ENCODE measurements at regions of chr2 and their contacts with region 1.

Region 1: GRCh38 chr2:85420536-85421259 is 2.2 kb downstream of the SH2D6 start:
- DNase-seq: peak; percentile 95
- ATAC-seq: peak; percentile 76
- H3K4me3 Mint-ChIP-seq: peak overlapping the region; percentile 78
- H3K27ac Mint-ChIP-seq: peak overlapping the region; percentile 80
- H3K4me1 Mint-ChIP-seq: peaks cover 25% of the 10 kb centered on the region
- H3K27me3 Mint-ChIP-seq: no peaks in the 10 kb centered on the region
- CTCF ChIP-seq: peak; percentile 90

Region 2: DNA sequence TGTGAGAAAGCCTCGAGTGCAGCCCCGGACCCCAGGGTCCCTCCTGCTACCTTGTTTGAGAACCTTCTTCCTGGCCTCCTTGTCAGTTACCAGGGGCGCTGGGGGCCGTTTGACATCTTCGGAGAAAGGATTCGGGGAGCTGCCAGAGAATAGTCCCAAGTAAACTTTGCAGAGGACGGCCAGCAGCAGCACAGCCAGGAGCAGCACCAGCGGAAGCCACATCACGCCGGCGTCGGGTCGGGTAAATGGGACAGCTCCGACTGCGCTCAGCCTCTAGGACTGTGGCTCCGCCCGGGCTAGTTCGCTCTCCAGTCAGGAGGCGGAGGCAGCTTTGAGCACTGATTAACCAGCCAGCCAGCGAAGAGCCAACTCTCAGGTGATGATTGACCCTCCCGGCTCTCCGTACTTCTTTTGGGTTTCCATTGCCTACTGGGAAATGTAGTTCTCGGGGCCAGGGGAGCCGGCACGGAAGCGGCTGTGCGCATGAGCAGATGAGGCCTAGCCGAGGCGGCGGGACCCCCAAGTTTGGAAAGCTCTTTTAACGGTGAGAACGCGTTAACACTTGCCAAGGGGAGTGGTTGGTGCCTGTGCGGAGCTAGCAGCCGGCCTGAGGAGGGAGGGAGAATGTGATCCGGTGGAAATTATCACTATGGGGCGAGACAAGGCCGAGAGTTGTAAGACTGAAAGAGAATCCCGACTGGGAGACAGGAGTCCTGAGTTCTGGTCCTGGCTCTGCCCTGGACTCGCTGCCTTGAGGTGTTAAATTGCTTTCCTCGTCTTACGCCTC is 66.2 kb before region 1 on chr2 and contains the starts of genes ELMOD3 and RETSAT:
- CTCF ChIA-PET with region 1: interaction called, 6 read pairs
- POLR2A ChIA-PET with region 1: interaction called, 28 read pairs
- intact Hi-C with region 1: loop called (anchors 1 kb)
- DNase-seq: peak; percentile 84
- ATAC-seq: peak; percentile 99
- H3K4me3 Mint-ChIP-seq: peak within 1 kb of the TSS; percentile 100
- H3K27ac Mint-ChIP-seq: peak within 1 kb of the TSS; percentile 99
- H3K4me1 Mint-ChIP-seq: peaks cover 48% of the 10 kb centered on the region
- H3K27me3 Mint-ChIP-seq: no peaks in the 10 kb centered on the region
- CTCF ChIP-seq: no peak
- total RNA-seq, gene ELMOD3: 19.2 and 25.4 TPM in 2 replicates
- total RNA-seq, gene RETSAT: 16.9 and 17.1 TPM in 2 replicates

Region 3: GRCh38 chr2:85437488-85438284 is 17.0 kb after region 1 on chr2:
- CTCF ChIA-PET with region 1: interaction called, 6 read pairs
- POLR2A ChIA-PET with region 1: interaction called, 31 read pairs
- intact Hi-C with region 1: loop called (anchors 1 kb)
- DNase-seq: peak; percentile 80
- ATAC-seq: peak; percentile 86
- H3K4me3 Mint-ChIP-seq: peak overlapping the region; percentile 87
- H3K27ac Mint-ChIP-seq: peak overlapping the region; percentile 95
- H3K4me1 Mint-ChIP-seq: peaks cover 33% of the 10 kb centered on the region
- H3K27me3 Mint-ChIP-seq: no peaks in the 10 kb centered on the region
- CTCF ChIP-seq: no peak

Region 4: GRCh38 chr2:85551698-85552678 is 131.3 kb after region 1 on chr2:
- CTCF ChIA-PET with region 1: interaction called, 162 read pairs
- POLR2A ChIA-PET with region 1: interaction called, 70 read pairs
- intact Hi-C with region 1: loop called (anchors 1 kb)
- DNase-seq: peak; percentile 63
- ATAC-seq: peak; percentile 98
- H3K4me3 Mint-ChIP-seq: no peak overlapping the region
- H3K27ac Mint-ChIP-seq: no peak overlapping the region
- H3K4me1 Mint-ChIP-seq: peaks cover 4% of the 10 kb centered on the region
- H3K27me3 Mint-ChIP-seq: no peaks in the 10 kb centered on the region
- CTCF ChIP-seq: peak; percentile 28

Region 5: DNA sequence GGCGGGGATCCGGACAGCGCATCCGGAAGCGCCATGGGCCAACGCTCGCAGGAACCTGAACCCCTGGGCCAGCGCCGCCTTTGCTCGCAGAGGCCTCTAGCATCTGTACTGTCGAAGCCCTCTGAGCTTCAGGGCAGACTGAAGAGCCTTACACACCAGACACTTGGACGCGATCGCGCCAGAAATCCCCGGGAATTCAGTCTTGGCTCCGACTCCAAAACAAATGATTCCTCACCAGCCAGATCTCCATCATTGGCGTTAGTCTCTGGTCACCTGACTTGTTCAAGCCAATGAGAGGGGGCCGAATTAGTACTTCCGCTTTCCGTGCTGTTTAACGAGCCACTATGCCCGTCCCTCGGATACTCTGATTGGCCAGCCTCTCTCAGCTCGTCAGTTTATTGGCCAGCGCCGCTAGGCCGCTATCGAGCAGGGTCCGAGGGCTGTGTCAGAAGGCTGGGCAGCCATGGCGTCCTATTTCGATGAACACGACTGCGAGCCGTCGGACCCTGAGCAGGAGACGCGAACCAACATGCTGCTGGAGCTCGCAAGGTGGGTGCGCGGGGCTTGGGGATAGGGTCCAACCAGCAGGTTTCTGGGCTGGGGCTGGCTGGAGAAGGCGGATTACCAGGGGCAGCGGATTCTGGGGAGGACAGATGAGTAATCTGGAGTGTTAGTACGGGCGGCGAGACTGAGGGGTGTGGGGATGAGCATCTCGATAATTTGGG is 174.8 kb after region 1 on chr2 and contains the start of gene RNF181:
- CTCF ChIA-PET with region 1: no interaction called
- POLR2A ChIA-PET with region 1: interaction called, 13 read pairs
- intact Hi-C with region 1: loop called (anchors 1 kb)
- DNase-seq: peak; percentile 71
- ATAC-seq: peak; percentile 99
- H3K4me3 Mint-ChIP-seq: peak within 1 kb of the TSS; percentile 99
- H3K27ac Mint-ChIP-seq: peak within 1 kb of the TSS; percentile 97
- H3K4me1 Mint-ChIP-seq: peaks cover 36% of the 10 kb centered on the region
- H3K27me3 Mint-ChIP-seq: no peaks in the 10 kb centered on the region
- CTCF ChIP-seq: no peak
- total RNA-seq, gene RNF181: 104 and 108 TPM in 2 replicates

Region 6: GRCh38 chr2:85642725-85643124 is 222.0 kb after region 1 on chr2:
- CTCF ChIA-PET with region 1: no interaction called
- POLR2A ChIA-PET with region 1: interaction called, 4 read pairs
- intact Hi-C with region 1: loop called (anchors 1 kb)
- DNase-seq: no peak
- ATAC-seq: no peak
- H3K4me3 Mint-ChIP-seq: no peak overlapping the region
- H3K27ac Mint-ChIP-seq: no peak overlapping the region
- H3K4me1 Mint-ChIP-seq: peaks cover 8% of the 10 kb centered on the region
- H3K27me3 Mint-ChIP-seq: no peaks in the 10 kb centered on the region
- CTCF ChIP-seq: no peak

Region 7: GRCh38 chr2:86105252-86105968 is 684.7 kb after region 1 on chr2 and contains the start of gene POLR1A:
- CTCF ChIA-PET with region 1: no interaction called
- POLR2A ChIA-PET with region 1: no interaction called
- intact Hi-C with region 1: loop called (anchors 10 kb)
- DNase-seq: peak; percentile 70
- ATAC-seq: peak; percentile 78
- H3K4me3 Mint-ChIP-seq: peak within 1 kb of the TSS; percentile 99
- H3K27ac Mint-ChIP-seq: peak within 1 kb of the TSS; percentile 100
- H3K4me1 Mint-ChIP-seq: peaks cover 53% of the 10 kb centered on the region
- H3K27me3 Mint-ChIP-seq: no peaks in the 10 kb centered on the region
- CTCF ChIP-seq: no peak
- total RNA-seq, gene POLR1A: 47.8 and 53.4 TPM in 2 replicates

Measured in activated B cell treated with CpG ODN at 0.5 μM for 24 hours (primary cell).